IMR-90 (cell line): ENCODE measurements at regions of chr19 and their contacts with region 1.

Region 1: DNA sequence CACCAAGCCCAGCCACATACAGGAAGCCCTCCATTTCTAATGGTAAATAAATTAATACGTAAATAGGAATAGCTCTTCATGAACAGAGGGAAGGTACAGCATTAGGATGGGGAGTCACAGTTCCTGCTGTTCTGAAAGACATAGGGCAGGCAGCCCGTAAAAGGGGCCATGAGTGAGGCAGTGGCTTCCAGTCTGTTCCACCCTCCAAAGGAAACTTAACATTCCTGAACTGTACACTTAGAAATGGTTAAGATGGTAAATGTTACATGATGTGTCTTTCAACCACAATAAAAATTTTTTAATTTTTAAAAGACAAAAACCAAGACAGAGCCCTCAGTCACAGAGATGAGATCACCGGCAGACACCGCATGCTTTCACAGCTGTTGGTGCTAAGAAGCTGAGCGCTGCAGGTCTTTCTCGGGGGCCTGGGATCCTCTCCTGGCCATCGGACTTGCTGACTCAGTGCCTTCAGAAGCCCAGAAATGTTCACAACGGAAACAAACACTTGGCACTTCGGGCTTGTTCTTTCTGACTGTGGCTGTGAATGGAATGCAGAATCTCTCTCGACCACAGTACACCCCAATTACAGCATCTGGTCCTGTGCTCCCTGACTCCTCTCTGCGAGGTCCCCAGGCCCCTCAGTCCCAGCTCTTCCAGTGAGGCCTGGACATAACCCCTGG is 36.4 kb downstream of the EPS15L1 start:
- DNase-seq: peak; percentile 98
- ATAC-seq: peak; percentile 96
- H3K4me3 ChIP-seq: no peak overlapping the region
- H3K27ac ChIP-seq: peak overlapping the region; percentile 77; the same call in 1 of the 2 replicates
- H3K4me1 ChIP-seq: peaks cover 13% of the 10 kb centered on the region
- H3K27me3 ChIP-seq: no peaks in the 10 kb centered on the region
- CTCF ChIP-seq: no peak
- POLR2A ChIP-seq: no peak
- RAD21 ChIP-seq: 0 out of 2 replicates have a peak, but pooled peaks have one; percentile 21

Region 2: DNA sequence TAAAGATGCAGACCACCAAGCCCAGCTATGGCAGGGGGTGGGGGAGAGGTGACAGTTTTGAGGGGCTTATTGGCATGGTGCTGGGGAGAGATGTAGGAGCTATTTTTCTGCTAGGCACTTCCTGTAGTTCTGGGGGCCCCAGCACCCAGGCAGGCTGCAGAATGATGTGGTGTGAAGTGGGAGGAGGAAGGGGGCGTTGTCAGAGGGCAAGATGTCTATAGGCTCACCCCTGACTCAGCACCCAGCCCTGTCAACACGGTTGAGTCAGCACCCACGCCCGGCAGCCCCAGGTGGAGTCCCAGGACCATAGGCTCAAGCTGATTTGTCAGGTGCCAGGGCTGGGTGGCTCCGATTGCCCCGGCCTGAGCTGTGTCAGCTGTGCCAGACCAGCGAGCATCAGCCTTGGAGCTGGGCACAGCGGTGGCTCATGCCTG is 105.0 kb before region 1 on chr19:
- CTCF ChIA-PET with region 1: no interaction called
- POLR2A ChIA-PET with region 1: no interaction called
- dilution Hi-C with region 1: no loop called
- in situ Hi-C with region 1: no loop called
- intact Hi-C with region 1: no loop called
- DNase-seq: peak; percentile 90
- ATAC-seq: peak; percentile 60
- H3K4me3 ChIP-seq: no peak overlapping the region
- H3K27ac ChIP-seq: no peak overlapping the region
- H3K4me1 ChIP-seq: peaks cover 16% of the 10 kb centered on the region
- H3K27me3 ChIP-seq: no peaks in the 10 kb centered on the region
- CTCF ChIP-seq: no peak
- POLR2A ChIP-seq: peak; percentile 79
- RAD21 ChIP-seq: 0 out of 2 replicates have a peak, but pooled peaks have one; percentile 8

Region 3: GRCh38 chr19:16400911-16401591 is 34.3 kb before region 1 on chr19:
- CTCF ChIA-PET with region 1: no interaction called
- POLR2A ChIA-PET with region 1: no interaction called
- dilution Hi-C with region 1: no loop called
- in situ Hi-C with region 1: no loop called
- intact Hi-C with region 1: no loop called
- DNase-seq: peak; percentile 4
- ATAC-seq: no peak
- H3K4me3 ChIP-seq: no peak overlapping the region
- H3K27ac ChIP-seq: no peak overlapping the region
- H3K4me1 ChIP-seq: no peaks in the 10 kb centered on the region; the same call in 1 of the 2 replicates
- H3K27me3 ChIP-seq: no peaks in the 10 kb centered on the region
- CTCF ChIP-seq: no peak
- POLR2A ChIP-seq: no peak
- RAD21 ChIP-seq: no peak

Region 4: GRCh38 chr19:16470911-16471811 is 35.8 kb after region 1 on chr19:
- CTCF ChIA-PET with region 1: no interaction called
- POLR2A ChIA-PET with region 1: no interaction called
- dilution Hi-C with region 1: no loop called
- in situ Hi-C with region 1: no loop called
- intact Hi-C with region 1: loop called (anchors 5 kb)
- DNase-seq: peak; percentile 55
- ATAC-seq: peak; percentile 21
- H3K4me3 ChIP-seq: peak overlapping the region; percentile 85
- H3K27ac ChIP-seq: peak overlapping the region; percentile 10; the same call in 1 of the 2 replicates
- H3K4me1 ChIP-seq: peaks cover 6% of the 10 kb centered on the region; the same call in 1 of the 2 replicates
- H3K27me3 ChIP-seq: no peaks in the 10 kb centered on the region
- CTCF ChIP-seq: no peak
- POLR2A ChIP-seq: no peak
- RAD21 ChIP-seq: no peak

Region 5: GRCh38 chr19:16528073-16528472 is 92.7 kb after region 1 on chr19:
- CTCF ChIA-PET with region 1: no interaction called
- POLR2A ChIA-PET with region 1: no interaction called
- dilution Hi-C with region 1: no loop called
- in situ Hi-C with region 1: no loop called
- intact Hi-C with region 1: no loop called
- DNase-seq: no peak
- ATAC-seq: peak; percentile 38; the same call in 1 of the 2 replicates
- H3K4me3 ChIP-seq: no peak overlapping the region
- H3K27ac ChIP-seq: no peak overlapping the region
- H3K4me1 ChIP-seq: no peaks in the 10 kb centered on the region
- H3K27me3 ChIP-seq: no peaks in the 10 kb centered on the region
- CTCF ChIP-seq: peak; percentile 25; the same call in 1 of the 2 replicates
- POLR2A ChIP-seq: no peak
- RAD21 ChIP-seq: 0 out of 2 replicates have a peak, but pooled peaks have one; percentile 27

Region 6: GRCh38 chr19:16542045-16542909 is 106.9 kb after region 1 on chr19 and contains the start of gene CHERP:
- CTCF ChIA-PET with region 1: no interaction called
- POLR2A ChIA-PET with region 1: no interaction called
- dilution Hi-C with region 1: no loop called
- in situ Hi-C with region 1: no loop called
- intact Hi-C with region 1: loop called (anchors 2 kb)
- DNase-seq: peak; percentile 91
- ATAC-seq: peak; percentile 91
- H3K4me3 ChIP-seq: peak within 1 kb of the TSS; percentile 86
- H3K27ac ChIP-seq: peak within 1 kb of the TSS; percentile 77
- H3K4me1 ChIP-seq: peaks cover 2% of the 10 kb centered on the region
- H3K27me3 ChIP-seq: no peaks in the 10 kb centered on the region
- CTCF ChIP-seq: no peak
- POLR2A ChIP-seq: peak; percentile 68
- RAD21 ChIP-seq: no peak
- total RNA-seq, gene CHERP: 0.54 and 1.1 TPM in 2 replicates